ENCODE measurements at regions of chr17 and their contacts with region 1.

Region 1: DNA sequence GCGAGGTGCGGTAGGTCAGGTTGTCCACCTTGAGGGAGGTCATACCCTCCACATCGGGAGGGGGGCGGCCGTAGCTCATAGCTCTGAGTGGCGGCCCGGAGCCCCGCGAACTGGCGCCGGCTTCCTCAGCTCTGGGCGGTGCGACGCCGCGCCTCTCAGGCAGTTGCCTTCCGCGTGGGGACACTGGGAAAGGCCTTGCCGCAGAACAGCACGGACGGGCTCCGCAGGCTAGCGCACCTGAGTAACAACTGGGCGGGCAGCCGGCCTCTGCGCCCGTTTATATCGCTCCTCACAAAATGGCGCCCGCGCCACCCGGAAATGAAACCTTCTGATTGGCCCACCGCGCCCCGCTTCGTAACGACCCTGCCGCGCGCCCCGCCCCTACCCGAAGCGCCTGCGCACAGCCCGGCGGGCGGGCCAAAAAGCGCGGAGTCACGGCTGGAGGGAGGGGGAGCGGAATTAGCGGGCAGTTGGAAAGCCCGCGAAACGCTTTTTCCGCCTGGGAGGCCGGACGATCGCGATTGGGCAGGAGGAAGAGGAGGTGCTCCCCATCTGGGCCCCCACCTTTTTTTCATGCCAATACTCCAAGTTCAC is at the start of gene SRSF2:
- DNase-seq: peak; percentile 96
- H3K4me3 ChIP-seq: peak within 1 kb of the TSS; percentile 93
- CTCF ChIP-seq: no peak

Region 2: GRCh38 chr17:76557368-76558197 is 179.6 kb before region 1 on chr17:
- in situ Hi-C with region 1: loop called (anchors 25 kb)
- DNase-seq: peak; percentile 93
- H3K4me3 ChIP-seq: peak overlapping the region; percentile 94
- CTCF ChIP-seq: peak; percentile 55

Region 3: DNA sequence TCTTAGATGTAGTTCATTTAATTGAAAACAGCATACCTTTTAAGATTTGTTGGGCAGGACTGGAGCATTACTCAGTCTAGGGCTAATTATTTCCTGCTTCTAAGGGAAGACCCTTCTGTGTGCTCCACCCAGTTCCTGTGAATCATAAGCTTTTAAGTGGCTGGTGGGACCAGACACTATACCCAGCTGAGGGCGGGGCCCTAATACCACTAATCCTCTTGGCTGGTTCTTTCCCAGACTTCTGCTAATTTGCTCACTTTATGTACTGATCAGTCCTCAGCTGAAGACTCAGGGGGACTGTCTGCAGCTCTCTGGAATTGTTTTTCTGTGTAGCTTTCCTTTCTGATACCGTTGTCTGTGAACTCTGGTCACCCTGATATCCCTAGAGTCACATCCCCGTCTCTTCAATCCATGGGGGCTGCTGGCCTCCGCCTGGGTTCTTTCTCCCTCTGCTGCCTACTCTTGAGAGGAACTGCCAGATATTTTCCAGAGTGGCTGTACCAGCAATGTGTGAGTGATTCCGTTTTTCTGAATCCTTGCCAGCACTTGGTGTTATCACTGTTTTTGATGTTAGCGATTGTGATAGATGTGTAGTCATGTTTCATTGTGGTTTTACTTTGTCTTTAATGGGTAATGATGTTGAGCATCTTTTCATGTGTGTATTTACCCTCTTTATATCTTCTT is 35.8 kb after region 1 on chr17:
- in situ Hi-C with region 1: no loop called
- DNase-seq: no peak
- H3K4me3 ChIP-seq: no peak overlapping the region
- CTCF ChIP-seq: no peak

Region 4: GRCh38 chr17:76791053-76791980 is 54.1 kb after region 1 on chr17:
- in situ Hi-C with region 1: no loop called
- DNase-seq: peak; percentile 80
- H3K4me3 ChIP-seq: no peak overlapping the region
- CTCF ChIP-seq: no peak

Measured in astrocyte of the cerebellum (primary cell).